K562 (cell line): ENCODE measurements at regions of chr1 and their contacts with region 1.

Region 1: DNA sequence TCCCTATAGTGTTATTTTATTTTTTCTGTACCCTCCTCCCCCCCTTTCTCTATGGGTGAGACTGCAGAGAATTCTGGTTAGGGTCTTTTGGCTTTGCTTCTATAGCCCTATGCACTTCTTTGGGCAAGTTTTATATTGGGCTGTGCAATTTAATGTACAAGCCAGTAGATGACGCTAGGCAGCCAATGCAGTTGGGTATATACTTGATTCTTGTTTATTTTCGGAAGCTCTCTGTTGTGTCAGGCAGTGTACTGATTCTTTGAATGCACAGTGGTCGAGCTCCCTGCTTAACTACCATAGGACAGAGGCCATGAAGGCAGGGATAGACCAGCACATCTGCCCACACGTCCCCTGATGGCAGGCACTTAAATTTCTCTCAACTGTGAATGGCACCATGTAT is 34.1 kb upstream of the GPR52 start:
- DNase-seq: peak in 1 of 4 experiments; percentile 18
- ATAC-seq: peak; percentile 86
- H3K4me3 ChIP-seq: no peak overlapping the region
- H3K27ac ChIP-seq: no peak overlapping the region
- H3K4me1 ChIP-seq: no peaks in the 10 kb centered on the region
- H3K27me3 ChIP-seq: no peaks in the 10 kb centered on the region
- CTCF ChIP-seq: peak; percentile 60 to 71 (median 60); a peak in 5 of 6 replicates
- EP300 ChIP-seq: no peak
- POLR2A ChIP-seq: no peak
- RAD21 ChIP-seq: peak in 1 of 2 experiments; percentile 63; a peak in 3 of 4 replicates

Region 2: DNA sequence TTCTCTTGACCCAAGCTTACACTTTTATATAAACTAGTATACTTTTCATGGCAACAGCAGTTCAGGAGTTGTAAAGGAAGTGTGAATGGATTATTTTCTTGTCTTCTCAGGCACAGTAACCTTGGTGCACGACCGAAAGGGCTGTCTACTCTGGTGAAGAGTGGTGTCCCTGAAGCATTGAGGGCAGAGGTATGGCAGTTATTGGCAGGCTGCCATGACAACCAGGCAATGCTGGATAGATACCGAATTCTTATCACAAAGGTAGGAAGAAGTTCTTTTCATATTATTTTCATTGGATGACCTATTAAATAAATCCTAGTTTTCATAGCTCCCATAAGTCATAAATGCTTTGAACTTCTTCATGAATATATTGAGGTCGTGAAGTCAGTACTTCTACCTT is 19.7 kb before region 1 on chr1:
- CTCF ChIA-PET with region 1: no interaction called
- POLR2A ChIA-PET with region 1: no interaction called
- in situ Hi-C with region 1: no loop called
- intact Hi-C with region 1: no loop called
- DNase-seq: no peak
- ATAC-seq: no peak
- H3K4me3 ChIP-seq: no peak overlapping the region
- H3K27ac ChIP-seq: no peak overlapping the region
- H3K4me1 ChIP-seq: no peaks in the 10 kb centered on the region
- H3K27me3 ChIP-seq: no peaks in the 10 kb centered on the region
- CTCF ChIP-seq: no peak
- EP300 ChIP-seq: no peak
- POLR2A ChIP-seq: no peak
- RAD21 ChIP-seq: no peak

Region 3: DNA sequence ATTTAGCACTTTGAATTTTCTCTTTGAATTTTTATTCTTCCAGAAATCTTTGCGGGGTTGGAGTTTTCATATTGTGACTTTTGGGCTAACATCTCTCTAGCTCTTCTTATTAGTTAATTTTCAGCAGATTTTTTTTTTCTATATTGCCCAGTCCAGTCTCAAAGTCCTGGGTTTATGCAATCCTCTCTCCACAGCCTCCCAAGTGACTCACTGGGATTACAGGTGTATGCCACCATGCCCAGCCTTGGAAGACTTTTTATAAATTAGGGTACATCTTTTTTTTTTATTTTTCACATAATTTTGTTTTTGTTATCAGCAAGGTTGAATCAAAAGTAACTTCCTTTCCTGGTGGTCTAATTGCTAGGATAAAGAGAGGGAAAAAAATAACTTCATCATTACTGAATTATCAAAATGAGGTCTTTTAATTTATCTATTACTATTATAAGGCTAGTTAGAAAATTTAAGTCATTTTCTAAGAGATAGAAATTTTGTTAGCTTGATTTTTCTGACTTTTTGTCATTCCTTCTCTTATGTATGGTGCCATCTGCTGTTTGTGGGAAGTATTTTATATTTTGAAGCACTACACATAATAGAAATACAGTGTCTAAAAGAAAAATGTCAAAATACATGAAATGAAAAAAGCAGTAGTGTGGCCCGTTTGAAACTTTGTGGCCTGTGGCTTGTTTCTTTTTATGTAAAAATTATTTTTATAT is 312.7 kb after region 1 on chr1:
- CTCF ChIA-PET with region 1: interaction called, 4 read pairs
- POLR2A ChIA-PET with region 1: no interaction called
- in situ Hi-C with region 1: no loop called
- intact Hi-C with region 1: loop called (anchors 1 kb)
- DNase-seq: peak in 1 of 4 experiments; percentile 25
- ATAC-seq: peak; percentile 46; the same call in 1 of the 3 replicates
- H3K4me3 ChIP-seq: no peak overlapping the region
- H3K27ac ChIP-seq: no peak overlapping the region
- H3K4me1 ChIP-seq: no peaks in the 10 kb centered on the region
- H3K27me3 ChIP-seq: no peaks in the 10 kb centered on the region
- CTCF ChIP-seq: peak in 1 of 3 experiments; percentile 69; a peak in 3 of 6 replicates
- EP300 ChIP-seq: no peak
- POLR2A ChIP-seq: no peak
- RAD21 ChIP-seq: peak; percentile 53 to 75

Region 4: GRCh38 chr1:174743654-174744561 is 330.3 kb after region 1 on chr1:
- CTCF ChIA-PET with region 1: no interaction called
- POLR2A ChIA-PET with region 1: no interaction called
- in situ Hi-C with region 1: no loop called
- intact Hi-C with region 1: loop called (anchors 5 kb)
- DNase-seq: peak; percentile 32 to 55 (median 44)
- ATAC-seq: peak; percentile 40
- H3K4me3 ChIP-seq: no peak overlapping the region
- H3K27ac ChIP-seq: no peak overlapping the region
- H3K4me1 ChIP-seq: peaks cover 4 to 15% of the 10 kb centered on the region in 2 experiments
- H3K27me3 ChIP-seq: no peaks in the 10 kb centered on the region
- CTCF ChIP-seq: peak; percentile 46 to 85 (median 51); a peak in 5 of 6 replicates
- EP300 ChIP-seq: no peak
- POLR2A ChIP-seq: no peak
- RAD21 ChIP-seq: peak; percentile 55 to 64